SK-N-SH (cell line): ENCODE measurements at regions of chr13 and their contacts with region 1.

Region 1: GRCh38 chr13:36275190-36276002 is 22.2 kb downstream of the CCDC169 start:
- DNase-seq: peak; percentile 39
- H3K4me3 ChIP-seq: no peak overlapping the region
- H3K27ac ChIP-seq: no peak overlapping the region
- H3K4me1 ChIP-seq: 0 out of 4 replicates have a peak, but pooled peaks cover 0 to 5% of the 10 kb centered on the region in 2 experiments
- H3K27me3 ChIP-seq: no peaks in the 10 kb centered on the region
- CTCF ChIP-seq: peak; percentile 80
- EP300 ChIP-seq: no peak
- RAD21 ChIP-seq: peak; percentile 87

Region 2: DNA sequence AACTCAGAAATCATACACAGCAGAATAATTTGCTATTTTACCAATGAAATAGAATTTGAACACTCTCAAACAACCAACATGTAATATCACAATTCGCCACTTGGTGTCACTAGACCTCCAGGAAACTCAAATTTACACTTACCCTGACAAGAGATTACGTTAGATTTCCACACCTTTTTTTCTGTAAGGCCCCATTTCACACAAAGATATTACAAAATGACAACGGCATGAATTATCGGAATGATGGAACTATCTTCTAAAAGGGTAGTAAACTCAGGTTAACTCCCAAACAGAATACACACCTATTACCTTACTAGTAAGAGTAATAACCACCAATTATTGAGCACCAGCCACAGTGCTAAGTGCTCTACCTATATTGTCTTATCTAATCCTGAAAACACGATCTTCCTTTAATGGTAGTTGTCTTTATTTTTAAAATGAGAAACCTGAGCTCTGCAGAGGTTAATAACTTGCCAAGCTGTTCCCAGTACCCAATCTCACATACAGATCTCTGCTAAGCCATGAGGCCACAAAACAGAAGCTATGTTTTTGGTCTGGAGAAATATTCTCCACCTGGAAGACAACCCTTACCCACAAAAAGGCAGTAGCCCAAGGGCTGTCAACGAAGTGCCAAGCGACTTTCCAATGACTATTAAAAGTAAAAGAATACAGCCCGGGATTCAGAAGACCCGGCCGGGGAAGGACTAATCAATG is 296.6 kb before region 1 on chr13:
- CTCF ChIA-PET with region 1: interaction called, 228 read pairs
- POLR2A ChIA-PET with region 1: interaction called, 3 read pairs
- DNase-seq: peak; percentile 54
- H3K4me3 ChIP-seq: no peak overlapping the region
- H3K27ac ChIP-seq: peak overlapping the region in 1 of 2 experiments; percentile 80; a peak in 2 of 4 replicates
- H3K4me1 ChIP-seq: peaks cover 0 to 2% of the 10 kb centered on the region in 2 experiments; a peak in 1 of 4 replicates
- H3K27me3 ChIP-seq: no peaks in the 10 kb centered on the region
- CTCF ChIP-seq: peak; percentile 83
- EP300 ChIP-seq: no peak
- RAD21 ChIP-seq: peak; percentile 97

Region 3: GRCh38 chr13:35988648-35989081 is 286.7 kb before region 1 on chr13:
- CTCF ChIA-PET with region 1: interaction called, 12 read pairs
- POLR2A ChIA-PET with region 1: no interaction called
- DNase-seq: no peak
- H3K4me3 ChIP-seq: no peak overlapping the region
- H3K27ac ChIP-seq: peak overlapping the region in 1 of 2 experiments; percentile 67; a peak in 2 of 4 replicates
- H3K4me1 ChIP-seq: peaks cover 6 to 30% of the 10 kb centered on the region in 2 experiments; a peak in 3 of 4 replicates
- H3K27me3 ChIP-seq: no peaks in the 10 kb centered on the region
- CTCF ChIP-seq: no peak
- EP300 ChIP-seq: peak; percentile 23 to 55; a peak in 2 of 4 replicates
- RAD21 ChIP-seq: no peak

Region 4: GRCh38 chr13:36086117-36086516 is 189.3 kb before region 1 on chr13:
- CTCF ChIA-PET with region 1: interaction called, 10 read pairs
- POLR2A ChIA-PET with region 1: no interaction called
- DNase-seq: peak; percentile 40
- H3K4me3 ChIP-seq: no peak overlapping the region
- H3K27ac ChIP-seq: no peak overlapping the region
- H3K4me1 ChIP-seq: peaks cover 0 to 6% of the 10 kb centered on the region in 2 experiments; a peak in 1 of 4 replicates
- H3K27me3 ChIP-seq: no peaks in the 10 kb centered on the region
- CTCF ChIP-seq: 0 out of 2 replicates have a peak, but pooled peaks have one; percentile 8
- EP300 ChIP-seq: peak in 1 of 2 experiments; percentile 39; a peak in 1 of 4 replicates
- RAD21 ChIP-seq: peak; percentile 54

Region 5: GRCh38 chr13:36251526-36251925 is 23.9 kb before region 1 on chr13:
- CTCF ChIA-PET with region 1: interaction called, 16 read pairs
- POLR2A ChIA-PET with region 1: no interaction called
- DNase-seq: no peak
- H3K4me3 ChIP-seq: no peak overlapping the region
- H3K27ac ChIP-seq: no peak overlapping the region
- H3K4me1 ChIP-seq: no peaks in the 10 kb centered on the region
- H3K27me3 ChIP-seq: no peaks in the 10 kb centered on the region
- CTCF ChIP-seq: no peak
- EP300 ChIP-seq: no peak
- RAD21 ChIP-seq: no peak

Region 6: DNA sequence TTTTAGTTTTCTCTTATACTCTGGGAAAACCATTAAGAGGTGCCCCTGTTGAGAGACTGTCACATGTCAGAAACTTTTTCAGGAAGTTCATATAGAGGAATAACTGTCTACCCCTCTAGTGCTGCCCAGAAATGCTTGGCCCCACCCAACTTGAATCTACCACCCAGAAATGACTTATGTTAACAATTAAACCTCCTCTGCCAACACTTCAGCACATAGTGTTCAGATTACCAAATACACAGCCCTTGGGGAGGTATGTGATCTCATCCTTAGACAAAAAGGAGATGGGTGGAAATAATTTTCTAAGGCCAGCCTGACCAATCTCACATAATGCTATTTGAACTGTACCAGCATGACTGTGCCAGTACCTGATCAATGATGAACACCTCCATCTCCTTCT is 13.4 kb before region 1 on chr13:
- CTCF ChIA-PET with region 1: interaction called, 26 read pairs
- POLR2A ChIA-PET with region 1: no interaction called
- DNase-seq: no peak
- H3K4me3 ChIP-seq: no peak overlapping the region
- H3K27ac ChIP-seq: no peak overlapping the region
- H3K4me1 ChIP-seq: no peaks in the 10 kb centered on the region
- H3K27me3 ChIP-seq: no peaks in the 10 kb centered on the region
- CTCF ChIP-seq: no peak
- EP300 ChIP-seq: no peak
- RAD21 ChIP-seq: no peak